ENCODE measurements at regions of chr19 and their contacts with region 1.

Region 1: DNA sequence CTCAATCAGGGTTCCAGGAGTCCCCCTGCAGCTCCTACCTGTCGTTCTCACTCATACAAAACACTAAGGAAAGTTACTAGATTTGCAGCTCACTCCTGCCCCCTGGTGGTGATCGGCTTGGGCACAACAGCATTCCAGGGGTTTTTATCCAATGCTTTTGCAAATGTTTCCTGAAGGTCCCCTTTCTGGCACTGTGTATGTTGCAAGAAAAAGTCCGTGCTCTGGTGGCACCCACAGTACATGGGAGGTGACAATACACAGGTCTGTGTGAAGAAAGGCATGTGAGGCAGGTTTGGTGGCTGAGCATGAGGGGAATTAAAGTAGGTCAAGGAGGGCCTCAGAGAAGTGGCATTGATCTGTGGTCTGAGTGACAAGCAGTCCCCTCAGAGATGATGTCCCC is 8.6 kb upstream of the TYK2 start:
- DNase-seq: peak; percentile 79
- H3K4me3 ChIP-seq: no peak overlapping the region
- H3K27ac ChIP-seq: no peak overlapping the region
- H3K4me1 ChIP-seq: peaks cover 2% of the 10 kb centered on the region
- CTCF ChIP-seq: peak; percentile 99

Region 2: DNA sequence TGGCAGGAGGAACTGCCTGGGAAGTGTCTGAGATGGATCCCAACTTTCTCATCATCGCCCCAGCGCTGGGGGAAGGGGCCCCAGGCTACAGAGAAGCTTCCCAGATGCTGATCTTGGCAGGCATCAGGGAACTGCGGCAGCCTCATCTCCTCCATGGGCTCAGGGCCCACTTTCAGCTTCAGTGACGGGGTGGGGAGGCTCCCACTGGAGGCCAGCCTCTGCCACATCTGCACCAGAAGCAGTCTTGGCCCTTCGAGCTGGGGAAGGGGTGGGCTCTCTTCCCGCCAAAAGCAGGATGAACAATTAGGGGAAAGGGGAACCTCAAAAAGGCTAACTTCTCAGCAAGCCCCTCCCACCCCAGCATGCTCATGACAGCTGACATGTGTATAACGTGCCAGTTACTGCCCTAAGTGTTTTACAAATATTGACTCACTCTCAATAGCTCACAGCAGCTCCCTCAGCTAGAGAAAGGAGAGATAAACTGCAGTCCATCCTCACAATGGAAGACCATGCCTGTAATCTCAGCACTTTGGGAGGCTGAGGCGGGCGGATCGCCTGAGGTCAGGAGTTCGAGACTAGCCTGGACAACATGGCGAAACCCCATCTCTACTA is 150.7 kb before region 1 on chr19:
- CTCF ChIA-PET with region 1: no interaction called
- POLR2A ChIA-PET with region 1: no interaction called
- intact Hi-C with region 1: no loop called
- DNase-seq: peak; percentile 56
- H3K4me3 ChIP-seq: peak overlapping the region; percentile 65
- H3K27ac ChIP-seq: peak overlapping the region; percentile 95
- H3K4me1 ChIP-seq: peaks cover 96% of the 10 kb centered on the region
- CTCF ChIP-seq: no peak

Region 3: GRCh38 chr19:10259162-10259905 is 129.6 kb before region 1 on chr19:
- CTCF ChIA-PET with region 1: no interaction called
- POLR2A ChIA-PET with region 1: interaction called, 4 read pairs
- intact Hi-C with region 1: loop called (anchors 2 kb)
- DNase-seq: peak; percentile 94
- H3K4me3 ChIP-seq: no peak overlapping the region
- H3K27ac ChIP-seq: no peak overlapping the region
- H3K4me1 ChIP-seq: peaks cover 6% of the 10 kb centered on the region
- CTCF ChIP-seq: peak; percentile 81

Measured in OCI-LY7 (cell line).